A549 (cell line): ENCODE measurements at regions of chr17 and their contacts with region 1.

Region 1: DNA sequence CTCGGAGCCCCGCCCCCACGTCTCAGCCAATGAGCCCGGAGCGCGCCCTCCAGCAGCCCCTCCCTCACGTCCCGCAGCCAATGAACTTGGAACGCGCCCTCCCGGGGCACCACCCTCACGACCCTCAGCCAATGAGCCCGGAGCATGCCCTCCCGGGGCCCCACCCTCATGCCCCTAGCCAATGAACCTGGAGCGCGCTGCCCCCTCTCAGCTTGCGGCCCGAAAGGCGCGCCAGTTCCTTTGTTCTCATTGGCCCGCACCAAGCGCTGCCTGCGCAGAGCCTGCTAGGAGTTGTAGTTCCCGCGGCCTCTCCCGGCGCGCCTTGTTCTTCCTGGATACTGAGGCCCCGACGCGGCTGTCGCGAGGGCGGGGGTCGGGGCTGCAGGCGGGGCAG is at the start of gene LRRC45:
- DNase-seq: peak; percentile 99 to 100
- ATAC-seq: peak; percentile 67 to 89
- H3K4me3 ChIP-seq: peak within 1 kb of the TSS; percentile 77
- H3K27ac ChIP-seq: peak within 1 kb of the TSS; percentile 80 to 92
- H3K4me1 ChIP-seq: peaks cover 39% of the 10 kb centered on the region
- CTCF ChIP-seq: no peak
- EP300 ChIP-seq: no peak
- POLR2A ChIP-seq: no peak
- RAD21 ChIP-seq: no peak
- polyA plus RNA-seq, gene LRRC45: 6.0 and 6.4 TPM in 2 replicates

Region 2: DNA sequence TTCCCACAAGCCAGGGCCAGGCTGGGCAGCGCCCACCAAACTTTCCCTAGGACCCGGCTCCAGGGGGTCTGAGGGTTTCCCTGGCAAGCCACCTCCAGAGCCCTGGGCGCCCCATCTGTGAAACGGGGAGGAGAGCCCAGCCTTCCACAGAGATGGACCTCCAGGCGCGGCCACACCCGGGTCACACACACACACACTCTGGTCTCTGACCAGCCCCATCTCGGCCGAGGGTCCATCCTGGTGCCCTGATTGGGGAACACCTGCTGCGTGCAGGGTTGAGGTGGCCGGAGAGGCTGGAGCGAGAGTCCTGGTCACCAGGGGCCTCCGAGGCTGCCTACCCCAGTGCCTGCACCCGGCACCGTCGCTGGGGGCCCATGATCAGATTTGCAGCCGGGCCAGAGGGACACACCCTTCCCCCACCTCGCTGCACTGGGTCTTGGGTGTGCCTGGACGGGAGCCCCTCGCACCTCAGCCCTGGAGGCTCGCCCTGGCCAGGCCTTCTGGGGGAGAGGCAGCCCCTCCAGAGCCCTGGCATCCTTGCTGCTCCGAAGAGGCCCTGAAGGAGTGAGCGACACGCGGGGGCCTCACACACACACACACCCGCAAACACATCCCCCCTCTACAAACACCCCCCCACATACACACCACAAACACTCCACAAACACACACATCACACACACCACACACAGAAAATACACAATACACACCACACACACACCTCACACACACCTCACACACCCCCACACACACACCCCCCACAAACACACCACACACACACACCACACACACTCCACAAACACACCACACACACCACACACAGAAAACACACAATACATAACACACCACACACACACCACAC is 281.2 kb before region 1 on chr17:
- CTCF ChIA-PET with region 1: no interaction called
- POLR2A ChIA-PET with region 1: no interaction called
- DNase-seq: no peak
- ATAC-seq: peak; percentile 63 to 75
- H3K4me3 ChIP-seq: no peak overlapping the region
- H3K27ac ChIP-seq: 0 out of 6 replicates have a peak overlapping the region, but pooled peaks of 1 of the 2 experiments have one; percentile 7
- H3K4me1 ChIP-seq: no peaks in the 10 kb centered on the region
- CTCF ChIP-seq: no peak
- EP300 ChIP-seq: no peak
- POLR2A ChIP-seq: no peak
- RAD21 ChIP-seq: no peak

Region 3: GRCh38 chr17:81821603-81822311 is 201.2 kb before region 1 on chr17:
- CTCF ChIA-PET with region 1: no interaction called
- POLR2A ChIA-PET with region 1: no interaction called
- DNase-seq: peak; percentile 85 to 93
- ATAC-seq: peak; percentile 61 to 90
- H3K4me3 ChIP-seq: no peak overlapping the region
- H3K27ac ChIP-seq: peak overlapping the region; percentile 54 to 81
- H3K4me1 ChIP-seq: peaks cover 24% of the 10 kb centered on the region
- CTCF ChIP-seq: peak; percentile 63
- EP300 ChIP-seq: no peak
- POLR2A ChIP-seq: no peak
- RAD21 ChIP-seq: peak; percentile 31 to 59; a peak in 2 of 5 replicates

Region 4: GRCh38 chr17:81833160-81833920 is 189.6 kb before region 1 on chr17 and contains the start of gene MCRIP1:
- CTCF ChIA-PET with region 1: no interaction called
- POLR2A ChIA-PET with region 1: no interaction called
- DNase-seq: peak; percentile 96 to 97
- ATAC-seq: peak; percentile 81 to 84
- H3K4me3 ChIP-seq: peak within 1 kb of the TSS; percentile 94
- H3K27ac ChIP-seq: peak within 1 kb of the TSS; percentile 93 to 99
- H3K4me1 ChIP-seq: peaks cover 21% of the 10 kb centered on the region; the same call in 2 of the 3 replicates
- CTCF ChIP-seq: no peak
- EP300 ChIP-seq: no peak
- POLR2A ChIP-seq: peak; percentile 88
- RAD21 ChIP-seq: no peak
- polyA plus RNA-seq, gene MCRIP1: 30.9 and 32.0 TPM in 2 replicates

Region 5: GRCh38 chr17:81871387-81872230 is 151.4 kb before region 1 on chr17:
- CTCF ChIA-PET with region 1: interaction called, 21 read pairs
- POLR2A ChIA-PET with region 1: interaction called, 3 read pairs
- DNase-seq: peak; percentile 95 to 96
- ATAC-seq: no peak
- H3K4me3 ChIP-seq: peak overlapping the region; percentile 99
- H3K27ac ChIP-seq: peak overlapping the region; percentile 97 to 100
- H3K4me1 ChIP-seq: peaks cover 41% of the 10 kb centered on the region
- CTCF ChIP-seq: no peak; the same call in 2 of the 3 replicates
- EP300 ChIP-seq: no peak
- POLR2A ChIP-seq: peak; percentile 77
- RAD21 ChIP-seq: no peak; a peak in 1 of 5 replicates

Region 6: GRCh38 chr17:81934850-81935708 is 87.9 kb before region 1 on chr17:
- CTCF ChIA-PET with region 1: interaction called, 17 read pairs
- POLR2A ChIA-PET with region 1: no interaction called
- DNase-seq: no peak
- ATAC-seq: no peak
- H3K4me3 ChIP-seq: no peak overlapping the region
- H3K27ac ChIP-seq: no peak overlapping the region
- H3K4me1 ChIP-seq: peaks cover 17% of the 10 kb centered on the region; the same call in 2 of the 3 replicates
- CTCF ChIP-seq: no peak
- EP300 ChIP-seq: no peak
- POLR2A ChIP-seq: no peak; the same call in 1 of the 2 replicates
- RAD21 ChIP-seq: no peak

Region 7: GRCh38 chr17:81977211-81978027 is 45.6 kb before region 1 on chr17 and contains the start of gene ASPSCR1:
- CTCF ChIA-PET with region 1: interaction called, 52 read pairs
- POLR2A ChIA-PET with region 1: interaction called, 5 read pairs
- DNase-seq: peak; percentile 74 to 95
- ATAC-seq: peak; percentile 88 to 89
- H3K4me3 ChIP-seq: peak within 1 kb of the TSS; percentile 89
- H3K27ac ChIP-seq: peak within 1 kb of the TSS; percentile 89 to 94
- H3K4me1 ChIP-seq: peaks cover 12% of the 10 kb centered on the region
- CTCF ChIP-seq: no peak
- EP300 ChIP-seq: no peak
- POLR2A ChIP-seq: peak; percentile 77
- RAD21 ChIP-seq: no peak
- polyA plus RNA-seq, gene ASPSCR1: 10.3 and 12.3 TPM in 2 replicates

Region 8: DNA sequence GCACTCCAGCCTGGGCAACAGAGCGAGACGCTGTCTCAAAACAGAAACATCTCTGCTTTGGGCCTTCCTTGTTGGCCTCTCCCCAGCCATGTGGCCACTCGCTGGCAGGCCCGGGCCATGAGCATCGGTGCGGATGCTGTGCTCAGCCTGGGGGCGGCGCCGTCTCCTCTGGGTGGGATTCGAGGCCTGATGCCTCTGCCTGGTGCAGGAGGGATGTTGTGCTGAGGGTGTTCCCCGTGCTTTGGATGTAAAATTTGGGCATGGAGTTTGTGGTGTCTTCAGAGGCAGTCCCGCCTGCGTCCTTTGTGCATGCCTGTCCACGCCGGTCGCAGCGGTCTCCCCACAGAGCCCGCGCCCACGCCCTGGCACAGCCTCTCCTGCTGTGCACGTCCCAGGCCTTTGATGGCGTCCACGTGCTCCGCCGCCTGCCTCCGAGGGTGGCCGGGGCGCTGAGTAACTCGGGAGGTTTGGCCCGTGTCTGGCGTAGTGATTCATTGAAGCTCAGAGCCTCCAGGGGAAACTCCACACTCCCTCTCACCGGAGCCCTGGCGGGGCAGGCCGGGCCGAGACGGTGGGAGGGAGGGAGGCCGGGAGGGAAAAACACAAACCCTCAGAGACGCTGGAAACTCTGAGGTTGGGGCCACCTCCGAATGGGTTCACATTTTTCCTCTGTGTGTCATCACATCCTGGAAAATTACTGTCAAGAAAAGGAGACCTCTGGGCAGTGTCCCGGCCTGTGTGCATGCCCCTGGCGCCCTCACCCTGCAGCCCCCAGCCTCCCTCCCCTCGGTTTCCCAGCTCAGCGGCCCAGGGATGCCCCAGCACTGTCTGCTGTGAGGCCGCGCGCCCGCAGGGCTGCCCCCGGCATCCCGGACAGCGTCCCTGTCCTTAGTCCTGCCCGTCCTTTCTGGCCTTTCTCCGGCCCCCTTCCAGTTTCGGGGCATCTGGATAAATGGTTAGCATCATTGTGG is 19.3 kb before region 1 on chr17:
- CTCF ChIA-PET with region 1: interaction called, 198 read pairs
- POLR2A ChIA-PET with region 1: interaction called, 9 read pairs
- DNase-seq: peak; percentile 90 to 95
- ATAC-seq: peak; percentile 85 to 91
- H3K4me3 ChIP-seq: no peak overlapping the region
- H3K27ac ChIP-seq: peak overlapping the region; percentile 81 to 93
- H3K4me1 ChIP-seq: peaks cover 64% of the 10 kb centered on the region
- CTCF ChIP-seq: no peak
- EP300 ChIP-seq: 0 out of 5 replicates have a peak, but pooled peaks of 1 of the 2 experiments have one; percentile 38
- POLR2A ChIP-seq: no peak
- RAD21 ChIP-seq: peak in 1 of 2 experiments; percentile 39; a peak in 2 of 5 replicates

Region 9: DNA sequence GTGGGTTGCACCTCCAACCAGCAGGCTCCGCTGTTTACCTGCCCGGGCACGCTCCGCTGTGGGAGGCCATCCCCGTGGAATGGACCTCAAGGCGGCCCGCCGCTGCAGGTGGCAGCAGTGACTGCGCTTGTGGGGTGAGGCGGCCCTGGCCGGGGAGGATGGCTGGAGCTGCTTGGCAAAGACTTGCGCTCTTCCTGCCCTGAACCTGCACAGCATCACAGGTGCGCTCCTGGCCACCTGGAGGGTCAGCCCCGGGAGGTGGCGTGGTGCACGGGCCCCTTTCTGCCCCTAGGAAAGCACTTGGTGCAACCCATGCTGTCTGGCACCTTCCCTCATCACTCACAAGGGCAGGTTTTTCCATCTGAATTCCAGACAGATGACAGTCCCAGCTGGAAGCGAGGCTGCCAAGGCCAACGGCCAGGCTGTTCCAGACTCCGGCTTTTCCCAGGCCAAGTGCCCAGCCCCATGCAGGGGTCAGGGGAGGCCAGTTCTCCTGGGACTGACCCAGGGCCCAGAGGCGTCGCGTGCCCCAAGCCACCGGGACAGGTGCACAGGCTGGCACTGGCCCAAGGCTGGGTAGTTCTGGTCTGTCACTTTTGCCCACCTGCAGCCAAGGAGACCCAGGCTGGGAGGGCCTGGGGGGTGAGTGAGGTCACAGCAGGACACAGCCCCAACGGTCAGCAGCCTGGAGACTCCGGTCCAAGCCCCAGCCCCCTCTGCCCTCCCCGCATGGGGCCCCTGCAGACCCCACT is 361.9 kb after region 1 on chr17:
- CTCF ChIA-PET with region 1: no interaction called
- POLR2A ChIA-PET with region 1: no interaction called
- DNase-seq: peak; percentile 60 to 65
- ATAC-seq: peak; percentile 31 to 63; a peak in 5 of 6 replicates
- H3K4me3 ChIP-seq: no peak overlapping the region
- H3K27ac ChIP-seq: peak overlapping the region; percentile 43 to 71; a peak in 4 of 6 replicates
- H3K4me1 ChIP-seq: peaks cover 29% of the 10 kb centered on the region
- CTCF ChIP-seq: no peak
- EP300 ChIP-seq: no peak
- POLR2A ChIP-seq: no peak
- RAD21 ChIP-seq: no peak